PC-9 (cell line): ENCODE measurements at regions of chr1 and their contacts with region 1.

Region 1: GRCh38 chr1:14817223-14818170 is 219.0 kb downstream of the KAZN start:
- DNase-seq: no peak
- H3K4me3 ChIP-seq: no peak overlapping the region
- H3K27ac ChIP-seq: no peak overlapping the region
- H3K4me1 ChIP-seq: no peaks in the 10 kb centered on the region
- H3K27me3 ChIP-seq: peaks cover 11% of the 10 kb centered on the region; the same call in 1 of the 2 replicates
- CTCF ChIP-seq: no peak

Region 2: DNA sequence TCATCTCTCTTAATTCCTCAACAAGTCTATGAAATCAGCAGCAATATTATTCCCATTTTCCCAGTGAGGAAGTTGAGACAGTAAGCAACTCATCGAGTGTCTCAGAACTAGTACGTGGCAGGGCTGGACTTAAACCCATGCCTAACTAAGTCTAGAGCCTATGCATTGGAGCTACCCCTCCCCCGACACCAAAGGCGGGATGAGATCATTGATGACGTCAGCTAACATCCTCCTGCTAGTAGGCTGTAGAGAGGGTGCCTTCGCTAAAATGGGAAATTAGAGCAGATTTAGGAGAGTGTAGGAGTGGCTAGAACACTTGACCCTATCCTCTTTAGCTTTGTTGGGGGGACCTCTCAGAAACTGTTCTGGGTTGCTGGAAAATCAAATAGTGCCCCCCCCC is 226.7 kb before region 1 on chr1:
- CTCF ChIA-PET with region 1: interaction called, 13 read pairs
- POLR2A ChIA-PET with region 1: no interaction called
- intact Hi-C with region 1: no loop called
- DNase-seq: no peak
- H3K4me3 ChIP-seq: no peak overlapping the region
- H3K27ac ChIP-seq: no peak overlapping the region
- H3K4me1 ChIP-seq: no peaks in the 10 kb centered on the region
- H3K27me3 ChIP-seq: peaks cover 4% of the 10 kb centered on the region; the same call in 1 of the 2 replicates
- CTCF ChIP-seq: no peak